Ascending aorta (tissue), 2 donors: ENCODE measurements at regions of chr1 and their contacts with region 1.

Region 1: GRCh38 chr1:237041795-237042525 is at the start of gene RYR2:
- DNase-seq: no peak
- H3K4me3 ChIP-seq: peak within 1 kb of the TSS; percentile 73 to 90
- H3K27ac ChIP-seq: peak within 1 kb of the TSS; percentile 68 to 88
- H3K4me1 ChIP-seq: peaks cover 0 to 4% of the 10 kb centered on the region in 2 donors
- H3K27me3 ChIP-seq: no peaks in the 10 kb centered on the region
- CTCF ChIP-seq: peak; percentile 33 to 89 (median 62)
- total RNA-seq, gene RYR2: 15.2 TPM

Region 2: DNA sequence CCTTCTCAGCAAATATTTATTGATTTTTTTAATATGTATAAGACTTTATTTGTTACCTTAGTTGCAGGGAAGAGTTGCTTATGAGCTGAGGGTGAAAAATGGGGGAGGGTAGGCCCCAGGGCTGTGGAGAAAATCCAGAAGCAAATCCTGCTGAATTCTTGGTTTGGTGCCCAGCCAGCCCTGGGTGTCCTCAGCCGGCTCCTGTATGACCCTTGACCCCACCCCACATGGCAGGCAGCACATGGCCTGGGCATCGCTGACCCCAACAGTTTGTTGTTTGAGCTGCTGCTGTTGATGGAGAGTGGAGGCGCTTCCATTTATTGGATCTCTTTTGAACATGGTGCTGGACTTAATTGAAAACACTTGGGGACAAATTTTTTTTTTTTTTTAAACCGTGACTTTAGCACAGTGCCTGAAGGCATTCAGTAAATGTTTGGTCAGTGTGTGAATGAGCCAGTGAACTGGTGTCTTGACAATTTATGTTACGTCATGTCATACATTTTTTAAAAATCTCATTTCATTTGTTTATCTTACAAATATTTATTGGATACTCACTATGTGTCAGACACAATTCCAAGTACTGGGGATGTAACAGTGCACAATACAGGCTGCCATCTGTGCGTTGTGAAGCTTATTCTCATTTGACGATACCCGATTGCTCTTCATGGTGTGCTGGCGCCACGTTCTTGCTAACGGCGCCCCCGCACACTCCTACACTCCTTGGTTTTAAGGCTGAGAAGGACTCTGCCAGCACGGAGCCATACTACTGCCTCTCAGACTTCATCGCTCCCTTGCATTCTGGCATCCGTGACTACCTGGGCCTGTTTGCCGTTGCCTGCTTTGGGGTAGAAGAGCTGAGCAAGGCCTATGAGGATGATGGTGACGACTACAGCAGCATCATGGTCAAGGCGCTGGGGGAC is 148.1 kb before region 1 on chr1:
- intact Hi-C with region 1: loop called (anchors 10 kb)
- DNase-seq: no peak
- H3K4me3 ChIP-seq: no peak overlapping the region
- H3K27ac ChIP-seq: no peak overlapping the region
- H3K4me1 ChIP-seq: no peaks in the 10 kb centered on the region
- H3K27me3 ChIP-seq: no peaks in the 10 kb centered on the region
- CTCF ChIP-seq: no peak

Region 3: DNA sequence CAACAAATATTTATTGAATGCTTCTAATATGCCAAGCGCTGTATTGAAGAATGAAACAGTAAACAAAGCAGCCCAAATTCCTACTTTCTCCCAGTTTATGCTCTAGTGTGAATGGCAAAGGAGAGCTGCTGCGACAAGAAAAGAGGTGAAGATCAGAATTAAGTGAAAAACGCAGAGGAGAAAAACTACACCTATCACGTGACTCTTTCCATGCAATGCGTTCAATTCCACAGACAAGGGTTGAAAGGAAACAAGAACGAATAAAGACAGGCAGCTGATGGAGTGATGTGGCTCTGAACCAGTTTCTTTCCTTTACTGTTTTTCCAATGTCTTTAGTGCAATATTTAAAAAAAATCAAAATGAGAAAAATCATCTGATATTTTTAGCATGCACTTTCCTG is 61.3 kb before region 1 on chr1:
- intact Hi-C with region 1: loop called (anchors 2 kb)
- DNase-seq: peak in 1 of 2 donors; percentile 11
- H3K4me3 ChIP-seq: no peak overlapping the region
- H3K27ac ChIP-seq: peak overlapping the region; percentile 2 to 62
- H3K4me1 ChIP-seq: peaks cover 0 to 2% of the 10 kb centered on the region in 2 donors
- H3K27me3 ChIP-seq: no peaks in the 10 kb centered on the region
- CTCF ChIP-seq: no peak